ENCODE measurements at regions of chr11 and their contacts with region 1.

Region 1: GRCh38 chr11:85854557-85855340 is 434 bp upstream of the CCDC83 start:
- DNase-seq: peak; percentile 88
- H3K4me3 Mint-ChIP-seq: peak overlapping the region; percentile 84
- H3K27ac Mint-ChIP-seq: peak overlapping the region; percentile 83
- H3K4me1 Mint-ChIP-seq: peaks cover 18% of the 10 kb centered on the region
- H3K27me3 Mint-ChIP-seq: peaks cover 5% of the 10 kb centered on the region

Region 2: DNA sequence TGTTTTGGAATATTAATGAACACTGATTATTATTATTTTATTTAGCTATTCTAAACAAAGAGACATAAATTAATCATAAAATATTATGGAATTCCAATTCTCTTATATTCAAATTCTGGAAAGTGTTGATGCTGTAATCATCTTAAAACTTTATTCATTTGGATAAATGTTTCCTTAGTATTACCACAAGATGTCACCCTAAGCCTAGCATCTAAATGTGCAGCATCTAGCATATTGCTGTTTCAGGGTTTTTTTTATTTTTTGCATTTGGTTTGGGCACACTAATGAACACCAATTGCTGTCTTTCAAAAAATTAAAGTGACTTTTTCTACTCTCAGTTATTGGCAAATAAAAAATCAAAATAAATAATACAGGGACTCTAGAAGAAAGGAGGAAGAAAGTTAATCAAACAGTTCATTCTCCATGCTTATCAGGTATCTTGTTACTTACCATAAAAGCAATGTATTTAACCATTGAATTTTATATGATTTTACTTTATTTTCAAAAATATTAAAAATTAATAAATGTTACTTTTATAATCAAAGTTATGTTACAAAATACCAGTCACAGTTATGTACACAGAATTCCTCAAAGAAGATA is 259.4 kb before region 1 on chr11:
- intact Hi-C with region 1: loop called (anchors 1 kb)
- DNase-seq: no peak
- H3K4me3 Mint-ChIP-seq: no peak overlapping the region
- H3K27ac Mint-ChIP-seq: no peak overlapping the region
- H3K4me1 Mint-ChIP-seq: no peaks in the 10 kb centered on the region
- H3K27me3 Mint-ChIP-seq: peaks cover 6% of the 10 kb centered on the region

Region 3: DNA sequence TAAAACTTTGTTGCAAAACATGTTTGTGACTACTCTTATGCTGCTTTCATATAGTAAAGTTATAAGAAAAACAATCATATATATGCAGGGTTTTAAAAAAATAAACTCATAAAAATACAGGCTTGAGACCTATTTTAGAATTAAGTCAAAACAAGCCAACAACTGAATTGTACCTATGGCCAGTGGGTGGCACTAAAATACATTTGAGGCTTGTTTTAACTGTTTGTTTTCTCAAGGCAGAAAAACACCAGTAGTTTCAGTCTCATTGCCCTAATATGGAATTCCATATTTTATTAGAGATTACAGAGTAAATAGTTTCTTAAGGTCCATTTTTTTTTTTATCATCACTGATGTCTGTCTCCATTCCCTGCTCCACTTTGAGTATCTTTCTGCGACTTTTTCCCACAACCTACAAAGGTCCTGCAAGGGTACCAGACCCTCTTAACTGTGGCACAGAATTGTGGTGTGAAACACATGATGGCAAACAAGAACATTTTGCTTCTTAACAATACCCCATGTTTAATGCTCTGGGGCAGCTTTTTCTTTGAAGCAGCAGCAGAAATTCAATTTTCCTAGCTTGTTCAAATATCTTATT is 160.3 kb before region 1 on chr11:
- intact Hi-C with region 1: loop called (anchors 1 kb)
- DNase-seq: no peak
- H3K4me3 Mint-ChIP-seq: no peak overlapping the region
- H3K27ac Mint-ChIP-seq: no peak overlapping the region
- H3K4me1 Mint-ChIP-seq: peaks cover 51% of the 10 kb centered on the region
- H3K27me3 Mint-ChIP-seq: peaks cover 4% of the 10 kb centered on the region

Region 4: DNA sequence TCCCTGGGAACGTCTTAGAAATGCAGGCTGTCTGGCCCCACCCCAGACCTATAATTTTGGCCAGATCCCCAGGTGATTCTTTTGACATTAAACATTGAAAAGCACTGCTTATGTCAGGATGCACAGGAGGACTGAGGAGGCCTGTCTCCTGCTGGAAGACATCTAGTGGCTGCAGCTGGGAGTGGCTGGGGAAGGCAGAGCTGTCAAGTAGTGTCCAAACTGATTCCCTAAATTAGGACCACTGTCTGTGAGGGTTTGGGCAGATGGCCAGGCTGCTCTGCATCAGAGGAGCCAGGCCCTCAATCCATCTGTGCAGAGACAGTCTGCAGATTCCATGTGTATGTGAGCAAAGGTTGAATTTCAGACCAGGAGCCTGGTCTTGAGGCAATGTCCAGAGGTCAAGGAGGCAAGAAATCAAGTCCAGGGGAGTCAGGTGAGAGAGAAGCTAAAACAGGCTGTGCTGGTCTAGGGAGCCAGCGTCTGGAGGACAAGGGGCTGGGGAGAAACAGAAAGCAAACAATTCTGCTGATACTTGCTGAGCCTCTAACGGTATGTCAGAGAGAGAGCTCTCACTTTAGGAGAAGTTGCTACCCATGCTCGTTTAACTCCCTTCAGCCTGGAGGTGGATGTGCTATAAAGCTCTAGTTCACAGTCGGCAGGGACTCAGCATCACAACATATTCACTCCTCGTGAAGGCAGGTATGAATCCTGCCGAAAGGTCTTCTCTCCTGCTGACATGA is 28.5 kb before region 1 on chr11:
- intact Hi-C with region 1: loop called (anchors 1 kb)
- DNase-seq: no peak
- H3K4me3 Mint-ChIP-seq: peak overlapping the region; percentile 1
- H3K27ac Mint-ChIP-seq: peak overlapping the region; percentile 87
- H3K4me1 Mint-ChIP-seq: peaks cover 74% of the 10 kb centered on the region
- H3K27me3 Mint-ChIP-seq: no peaks in the 10 kb centered on the region

Region 5: DNA sequence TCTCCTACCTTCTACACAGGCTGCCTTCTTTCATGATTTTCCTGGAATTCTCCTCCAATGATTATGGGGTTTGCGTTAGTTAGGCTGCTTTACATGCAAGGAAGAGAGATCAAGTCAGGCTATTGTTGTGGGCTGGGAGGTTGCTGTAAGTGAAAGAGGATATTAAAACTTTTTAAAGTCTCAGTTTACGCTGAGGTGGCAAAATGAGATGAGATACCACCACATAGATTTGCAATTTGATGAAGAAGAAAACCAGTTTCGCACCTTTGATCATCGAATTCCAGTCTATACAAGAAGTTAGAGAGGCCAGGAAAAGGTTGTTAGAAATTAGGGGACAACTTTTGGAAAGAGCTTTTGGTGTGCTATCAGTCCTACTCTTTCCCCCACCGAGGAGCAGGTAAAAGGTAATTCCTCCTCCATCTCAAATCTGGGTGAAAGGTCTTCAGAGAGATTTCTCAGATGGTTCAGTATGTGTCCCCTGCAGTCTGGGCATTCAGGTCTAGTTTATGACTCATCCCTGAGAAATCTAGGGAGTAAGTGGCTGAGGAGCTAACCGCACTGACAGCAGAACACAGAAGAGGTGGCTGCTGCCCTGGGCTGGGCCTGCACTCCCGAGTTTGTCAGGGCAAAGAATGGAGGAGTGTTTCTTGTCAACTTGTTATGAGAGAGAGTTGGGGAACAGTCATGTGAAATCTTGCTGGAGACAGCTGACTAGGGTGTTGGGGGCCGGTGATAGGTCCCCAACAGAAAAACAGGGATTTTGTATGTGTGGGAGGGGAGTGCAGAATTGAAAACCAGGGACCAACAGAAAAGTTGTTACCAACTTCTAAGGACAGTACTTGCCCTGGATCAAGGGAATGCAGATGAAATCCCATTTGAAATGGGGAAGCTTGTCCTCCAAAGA is 35.2 kb after region 1 on chr11:
- intact Hi-C with region 1: no loop called
- DNase-seq: no peak
- H3K4me3 Mint-ChIP-seq: no peak overlapping the region
- H3K27ac Mint-ChIP-seq: no peak overlapping the region
- H3K4me1 Mint-ChIP-seq: no peaks in the 10 kb centered on the region
- H3K27me3 Mint-ChIP-seq: peaks cover 5% of the 10 kb centered on the region

Region 6: GRCh38 chr11:85977751-85978160 is 123.0 kb after region 1 on chr11:
- intact Hi-C with region 1: no loop called
- DNase-seq: no peak
- H3K4me3 Mint-ChIP-seq: no peak overlapping the region
- H3K27ac Mint-ChIP-seq: no peak overlapping the region
- H3K4me1 Mint-ChIP-seq: peaks cover 33% of the 10 kb centered on the region
- H3K27me3 Mint-ChIP-seq: no peaks in the 10 kb centered on the region

Region 7: DNA sequence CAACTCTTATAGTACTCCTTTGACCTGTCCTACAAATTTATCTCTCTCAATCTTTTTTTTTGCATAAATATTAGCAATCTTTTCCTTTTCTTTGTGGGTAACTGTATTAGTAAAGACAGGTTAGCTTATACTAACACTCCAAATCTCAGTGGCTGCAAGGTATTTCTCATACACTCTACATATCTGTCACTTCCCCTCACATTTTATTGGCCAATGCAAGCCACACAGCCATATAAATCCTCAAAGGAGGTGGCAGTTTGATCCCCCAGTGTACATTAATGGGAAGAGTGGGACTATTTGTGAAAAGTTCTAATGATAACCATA is 347.2 kb after region 1 on chr11:
- intact Hi-C with region 1: loop called (anchors 5 kb)
- DNase-seq: no peak
- H3K4me3 Mint-ChIP-seq: no peak overlapping the region
- H3K27ac Mint-ChIP-seq: no peak overlapping the region
- H3K4me1 Mint-ChIP-seq: peaks cover 21% of the 10 kb centered on the region
- H3K27me3 Mint-ChIP-seq: no peaks in the 10 kb centered on the region

Region 8: GRCh38 chr11:86370922-86371594 is 516.3 kb after region 1 on chr11:
- intact Hi-C with region 1: no loop called
- DNase-seq: no peak
- H3K4me3 Mint-ChIP-seq: no peak overlapping the region
- H3K27ac Mint-ChIP-seq: no peak overlapping the region
- H3K4me1 Mint-ChIP-seq: peaks cover 14% of the 10 kb centered on the region
- H3K27me3 Mint-ChIP-seq: peaks cover 5% of the 10 kb centered on the region

Region 9: DNA sequence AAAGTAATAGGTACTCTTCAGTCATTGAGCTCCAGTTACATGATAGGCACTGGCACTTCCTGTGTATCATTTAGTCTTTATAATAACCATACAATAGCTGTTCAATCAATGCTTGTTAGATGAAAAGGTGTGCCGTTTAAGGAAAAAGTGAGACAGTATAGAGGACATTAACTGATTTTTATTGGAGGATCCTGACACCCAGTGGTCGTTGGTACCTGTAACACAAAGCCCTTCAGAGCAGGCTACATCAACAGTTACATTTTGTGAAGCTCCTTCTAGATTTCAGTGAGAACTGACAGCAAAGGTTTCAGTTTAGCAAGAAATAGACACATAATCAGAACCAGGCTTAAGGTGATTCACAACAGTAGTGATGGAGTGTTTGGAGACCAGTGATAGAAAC is 564.2 kb after region 1 on chr11:
- intact Hi-C with region 1: loop called (anchors 2 kb)
- DNase-seq: no peak
- H3K4me3 Mint-ChIP-seq: no peak overlapping the region
- H3K27ac Mint-ChIP-seq: peak overlapping the region; percentile 14
- H3K4me1 Mint-ChIP-seq: peaks cover 19% of the 10 kb centered on the region
- H3K27me3 Mint-ChIP-seq: no peaks in the 10 kb centered on the region

Region 10: GRCh38 chr11:86818466-86819192 is 963.9 kb after region 1 on chr11:
- intact Hi-C with region 1: loop called (anchors 1 kb)
- DNase-seq: no peak
- H3K4me3 Mint-ChIP-seq: no peak overlapping the region
- H3K27ac Mint-ChIP-seq: no peak overlapping the region
- H3K4me1 Mint-ChIP-seq: peaks cover 31% of the 10 kb centered on the region
- H3K27me3 Mint-ChIP-seq: peaks cover 24% of the 10 kb centered on the region

Region 11: DNA sequence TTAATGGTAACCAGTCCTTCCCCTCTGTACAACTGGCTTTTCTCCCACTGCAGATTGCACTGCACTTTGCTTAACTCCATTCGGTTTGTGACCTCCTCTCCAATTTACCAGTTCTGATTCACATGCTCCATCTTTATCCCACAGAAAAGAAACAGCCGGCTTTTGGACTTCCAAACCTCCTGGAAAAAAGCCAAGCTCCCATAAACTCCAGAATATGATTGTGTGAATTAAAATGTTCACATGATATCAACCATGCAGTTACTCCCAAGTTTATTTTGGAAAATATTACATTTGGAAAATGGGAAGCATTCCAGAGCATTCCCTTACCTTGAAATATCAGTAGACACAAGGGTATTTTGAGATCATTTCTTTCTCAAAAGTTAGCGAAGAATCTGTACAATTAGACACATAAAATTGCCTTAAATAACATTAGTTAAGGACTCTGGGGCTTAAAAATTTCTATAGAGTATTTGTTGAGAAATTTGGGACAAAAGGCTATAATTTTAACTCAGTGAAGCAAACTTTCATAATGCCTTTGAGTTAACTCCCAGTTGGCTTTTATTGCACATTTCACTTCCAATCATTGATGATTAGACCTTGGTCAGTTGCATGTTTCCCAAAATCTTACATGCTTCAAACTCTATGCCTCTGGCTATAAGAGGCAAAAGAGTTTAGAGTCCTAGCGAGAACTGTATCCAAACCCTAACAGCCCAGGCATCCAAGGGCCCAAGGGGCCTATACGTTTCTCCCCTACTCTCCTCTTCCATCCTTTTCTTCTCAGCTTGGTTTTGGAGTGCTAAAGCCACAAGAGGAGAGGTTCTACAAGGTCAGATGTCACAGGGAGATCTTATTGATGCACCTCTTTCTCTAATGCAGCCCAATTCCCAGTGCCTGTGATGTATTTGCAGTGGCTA is 1159.4 kb after region 1 on chr11:
- intact Hi-C with region 1: no loop called
- DNase-seq: no peak
- H3K4me3 Mint-ChIP-seq: no peak overlapping the region
- H3K27ac Mint-ChIP-seq: no peak overlapping the region
- H3K4me1 Mint-ChIP-seq: no peaks in the 10 kb centered on the region
- H3K27me3 Mint-ChIP-seq: peaks cover 4% of the 10 kb centered on the region

Measured in activated T-helper 1 cell treated with anti-CD3 and anti-CD28 coated beads, Interleukin-12 subunit alpha, Interleukin-12 subunit beta, Interleukin-2, Interleukin-4 antibody, amounts not matched to agents 30 ng/mL and 10 ng/mL and 1 ng/mL, durations not matched to agents 14 hours and 24 hours and 36 hours (primary cell).